ENCODE measurements at regions of chr19 and their contacts with region 1.

Region 1: GRCh38 chr19:47676811-47677210 is 36.4 kb upstream of the EHD2 start:
- DNase-seq: no peak
- H3K4me3 ChIP-seq: no peak overlapping the region
- CTCF ChIP-seq: no peak

Region 2: DNA sequence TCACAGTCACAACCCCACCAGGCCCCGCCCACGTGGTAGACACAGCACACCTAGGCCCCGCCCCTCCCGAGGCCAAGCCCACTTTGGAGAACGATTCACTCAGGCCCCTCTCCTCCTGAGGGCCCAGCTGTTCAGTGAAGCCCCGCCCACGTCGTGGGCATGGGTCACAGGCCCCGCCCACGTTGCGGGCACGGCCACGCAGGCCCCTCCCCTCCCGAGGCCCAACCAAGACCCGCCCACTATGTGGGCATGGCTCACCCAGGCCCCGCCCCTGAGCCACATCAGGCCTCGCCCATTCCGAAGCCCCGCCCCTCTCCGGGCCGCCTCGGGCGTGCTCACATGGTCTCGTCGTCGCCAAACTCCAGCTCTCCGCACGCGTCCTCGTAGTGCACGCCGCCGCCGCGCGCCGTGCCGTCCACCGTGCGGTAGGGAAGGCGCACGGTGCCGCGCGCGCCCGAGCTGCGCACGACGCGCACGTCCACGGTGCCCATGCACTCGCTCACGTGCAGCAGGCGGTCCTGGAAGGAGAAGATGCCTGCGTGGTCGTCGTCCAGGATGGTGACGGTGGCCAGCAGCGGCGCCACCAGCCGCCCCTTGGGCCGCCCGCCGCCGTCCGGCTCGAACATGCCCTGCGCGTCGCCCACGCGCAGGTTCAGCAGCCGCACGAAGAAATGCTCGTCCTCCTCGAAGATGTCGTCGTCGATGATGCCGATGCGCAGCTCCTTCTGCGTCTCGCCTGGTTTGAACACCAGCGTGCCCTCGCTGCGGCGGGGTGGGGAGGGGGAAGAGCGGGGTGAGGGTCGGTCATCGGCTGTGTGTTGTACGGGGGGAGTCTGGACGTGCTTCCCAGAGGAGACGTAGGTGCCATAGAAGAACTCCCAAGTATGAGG is 229.1 kb before region 1 on chr19:
- in situ Hi-C with region 1: loop called (anchors 10 kb)
- DNase-seq: no peak
- H3K4me3 ChIP-seq: no peak overlapping the region
- CTCF ChIP-seq: no peak

Region 3: DNA sequence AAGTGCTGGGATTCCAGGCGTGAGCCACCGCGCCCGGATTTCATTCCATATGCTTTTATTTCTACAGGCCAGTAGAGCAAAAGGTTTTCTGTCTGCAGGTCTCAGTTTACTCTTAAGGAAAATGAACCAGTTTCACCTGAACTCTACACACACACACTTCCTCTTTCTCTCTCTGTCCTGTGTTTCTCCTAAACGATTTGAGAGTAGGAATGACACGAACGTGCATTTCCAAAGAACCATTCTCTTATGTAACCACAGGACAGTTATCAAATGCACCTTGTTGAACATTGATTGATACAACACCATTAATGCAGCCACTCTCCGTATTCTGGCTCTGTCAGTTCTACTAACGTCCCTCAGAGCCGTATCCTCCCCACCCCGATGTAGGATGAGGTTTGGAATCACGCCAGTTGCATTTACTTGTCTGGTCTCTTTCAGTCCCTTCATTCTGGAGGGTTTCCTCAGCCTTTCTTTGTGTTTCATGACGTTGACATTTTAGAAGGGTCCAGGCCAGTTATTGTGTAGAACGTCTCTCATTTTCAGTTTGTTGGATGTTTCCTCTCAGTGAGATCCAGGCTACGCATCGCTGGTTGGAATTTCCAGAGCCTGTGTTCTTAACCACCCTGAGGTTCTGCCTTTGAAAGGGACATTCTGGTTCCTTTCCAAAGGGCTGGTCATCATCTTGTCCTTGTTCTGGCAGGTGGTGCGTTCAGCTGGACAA is 31.9 kb before region 1 on chr19:
- in situ Hi-C with region 1: no loop called
- DNase-seq: peak; percentile 28
- H3K4me3 ChIP-seq: no peak overlapping the region
- CTCF ChIP-seq: no peak

Region 4: GRCh38 chr19:47729992-47730889 is 53.4 kb after region 1 on chr19:
- in situ Hi-C with region 1: no loop called
- DNase-seq: no peak
- H3K4me3 ChIP-seq: peak overlapping the region; percentile 25
- CTCF ChIP-seq: no peak